B cell (primary cell): ENCODE measurements at regions of chr17 and their contacts with region 1.

Region 1: DNA sequence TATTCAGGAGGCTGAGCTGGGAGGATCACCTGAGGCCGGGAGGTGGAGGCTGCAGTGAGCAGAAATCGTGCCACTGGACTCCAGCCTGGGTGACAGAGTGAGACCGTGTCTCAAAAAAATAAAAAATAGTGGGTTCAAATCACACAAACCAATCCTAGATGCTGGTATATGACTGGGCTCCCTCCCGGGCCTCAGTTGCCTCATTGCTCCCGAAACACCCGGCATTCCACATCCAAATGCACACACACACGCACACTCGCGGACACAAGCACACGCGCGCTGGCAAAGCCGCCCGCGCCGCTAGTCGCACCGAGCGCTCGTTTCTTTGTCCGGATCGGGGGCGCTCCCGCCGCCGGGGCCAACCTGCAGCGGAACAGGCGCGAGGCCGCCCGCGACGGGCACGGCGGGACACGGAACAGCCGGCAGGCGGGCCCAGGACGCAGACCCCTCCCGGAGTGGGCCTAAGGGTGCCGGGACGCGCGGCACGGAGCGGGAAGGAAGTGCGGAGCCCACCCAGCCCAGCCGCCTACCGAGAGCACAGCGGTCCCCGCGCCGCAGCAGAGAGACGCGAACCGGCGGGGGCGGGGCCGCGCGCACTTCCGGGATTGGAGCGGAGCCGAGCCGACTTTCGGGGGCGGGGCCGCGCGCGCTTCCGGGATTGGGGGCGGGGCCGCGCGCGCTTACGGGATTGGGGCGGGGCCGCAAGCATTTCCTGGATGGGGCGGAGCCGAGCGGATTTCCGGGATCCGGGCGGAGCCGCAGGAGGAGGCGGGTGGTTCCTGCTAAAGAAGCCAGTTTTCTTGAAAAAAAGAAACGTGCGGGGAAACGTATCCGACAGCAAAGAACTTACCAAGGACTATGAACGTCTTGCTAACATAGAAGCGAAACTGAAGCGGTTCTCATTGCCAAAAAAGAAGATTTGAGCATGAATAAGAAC is at the start of gene CYBC1:
- DNase-seq: peak; percentile 97
- ATAC-seq: peak; percentile 55
- H3K4me3 ChIP-seq: peak within 1 kb of the TSS; percentile 81 to 99 (median 93)
- H3K4me3 Mint-ChIP-seq: peak within 1 kb of the TSS; percentile 88
- H3K27ac ChIP-seq: peak within 1 kb of the TSS; percentile 95 to 99
- H3K27ac Mint-ChIP-seq: peak within 1 kb of the TSS; percentile 96
- H3K4me1 ChIP-seq: peaks cover 17 to 47% of the 10 kb centered on the region in 2 donors
- H3K4me1 Mint-ChIP-seq: peaks cover 40% of the 10 kb centered on the region
- H3K27me3 ChIP-seq: no peaks in the 10 kb centered on the region
- H3K27me3 Mint-ChIP-seq: no peaks in the 10 kb centered on the region
- CTCF ChIP-seq: no peak
- total RNA-seq, gene CYBC1: 569 and 578 TPM in 2 replicates

Region 2: GRCh38 chr17:82434216-82434565 is 16.2 kb before region 1 on chr17:
- CTCF ChIA-PET with region 1: interaction called, 3 read pairs
- POLR2A ChIA-PET with region 1: interaction called, 13 read pairs
- intact Hi-C with region 1: loop called (anchors 2 kb)
- DNase-seq: peak; percentile 76
- ATAC-seq: peak; percentile 80
- H3K4me3 ChIP-seq: no peak overlapping the region
- H3K4me3 Mint-ChIP-seq: peak overlapping the region; percentile 59
- H3K27ac ChIP-seq: peak overlapping the region; percentile 29 to 61
- H3K27ac Mint-ChIP-seq: peak overlapping the region; percentile 80
- H3K4me1 ChIP-seq: peaks cover 22 to 60% of the 10 kb centered on the region in 2 donors
- H3K4me1 Mint-ChIP-seq: peaks cover 36% of the 10 kb centered on the region
- H3K27me3 ChIP-seq: no peaks in the 10 kb centered on the region
- H3K27me3 Mint-ChIP-seq: no peaks in the 10 kb centered on the region
- CTCF ChIP-seq: no peak